ENCODE measurements at regions of chr11 and their contacts with region 1.

Region 1: GRCh38 chr11:77091146-77091940 is 11.3 kb upstream of the OMP start:
- DNase-seq: peak; percentile 65 to 79 (median 74)
- H3K4me3 ChIP-seq: no peak overlapping the region
- H3K4me3 Mint-ChIP-seq: peak overlapping the region in 1 of 8 donors; percentile 18
- H3K27ac ChIP-seq: no peak overlapping the region
- H3K27ac Mint-ChIP-seq: peak overlapping the region in 2 of 7 donors; percentile 36 to 67
- H3K4me1 ChIP-seq: peaks cover 6% of the 10 kb centered on the region
- H3K4me1 Mint-ChIP-seq: peaks cover 1 to 7% (median 5%) of the 10 kb centered on the region in 4 donors
- H3K27me3 ChIP-seq: no peaks in the 10 kb centered on the region
- H3K27me3 Mint-ChIP-seq: no peaks in the 10 kb centered on the region

Region 2: GRCh38 chr11:76807206-76807875 is 284.0 kb before region 1 on chr11:
- CTCF ChIA-PET with region 1: interaction called, 7 read pairs
- POLR2A ChIA-PET with region 1: no interaction called
- intact Hi-C with region 1: loop called (anchors 5 kb)
- DNase-seq: peak; percentile 25 to 57 (median 45)
- H3K4me3 ChIP-seq: no peak overlapping the region
- H3K4me3 Mint-ChIP-seq: peak overlapping the region in 1 of 8 donors; percentile 48
- H3K27ac ChIP-seq: no peak overlapping the region
- H3K27ac Mint-ChIP-seq: no peak overlapping the region
- H3K4me1 ChIP-seq: peaks cover 5% of the 10 kb centered on the region
- H3K4me1 Mint-ChIP-seq: peaks cover 4 to 21% (median 10%) of the 10 kb centered on the region in 4 donors
- H3K27me3 ChIP-seq: no peaks in the 10 kb centered on the region
- H3K27me3 Mint-ChIP-seq: peaks cover 6 to 23% of the 10 kb centered on the region in 2 donors

Region 3: GRCh38 chr11:76885390-76886097 is 205.8 kb before region 1 on chr11:
- CTCF ChIA-PET with region 1: no interaction called
- POLR2A ChIA-PET with region 1: no interaction called
- intact Hi-C with region 1: no loop called
- DNase-seq: no peak
- H3K4me3 ChIP-seq: no peak overlapping the region
- H3K4me3 Mint-ChIP-seq: peak overlapping the region in 2 of 8 donors; percentile 7
- H3K27ac ChIP-seq: no peak overlapping the region
- H3K27ac Mint-ChIP-seq: no peak overlapping the region
- H3K4me1 ChIP-seq: no peaks in the 10 kb centered on the region
- H3K4me1 Mint-ChIP-seq: peaks cover 0 to 1% (median under 1%) of the 10 kb centered on the region in 4 donors
- H3K27me3 ChIP-seq: no peaks in the 10 kb centered on the region
- H3K27me3 Mint-ChIP-seq: no peaks in the 10 kb centered on the region

Region 4: DNA sequence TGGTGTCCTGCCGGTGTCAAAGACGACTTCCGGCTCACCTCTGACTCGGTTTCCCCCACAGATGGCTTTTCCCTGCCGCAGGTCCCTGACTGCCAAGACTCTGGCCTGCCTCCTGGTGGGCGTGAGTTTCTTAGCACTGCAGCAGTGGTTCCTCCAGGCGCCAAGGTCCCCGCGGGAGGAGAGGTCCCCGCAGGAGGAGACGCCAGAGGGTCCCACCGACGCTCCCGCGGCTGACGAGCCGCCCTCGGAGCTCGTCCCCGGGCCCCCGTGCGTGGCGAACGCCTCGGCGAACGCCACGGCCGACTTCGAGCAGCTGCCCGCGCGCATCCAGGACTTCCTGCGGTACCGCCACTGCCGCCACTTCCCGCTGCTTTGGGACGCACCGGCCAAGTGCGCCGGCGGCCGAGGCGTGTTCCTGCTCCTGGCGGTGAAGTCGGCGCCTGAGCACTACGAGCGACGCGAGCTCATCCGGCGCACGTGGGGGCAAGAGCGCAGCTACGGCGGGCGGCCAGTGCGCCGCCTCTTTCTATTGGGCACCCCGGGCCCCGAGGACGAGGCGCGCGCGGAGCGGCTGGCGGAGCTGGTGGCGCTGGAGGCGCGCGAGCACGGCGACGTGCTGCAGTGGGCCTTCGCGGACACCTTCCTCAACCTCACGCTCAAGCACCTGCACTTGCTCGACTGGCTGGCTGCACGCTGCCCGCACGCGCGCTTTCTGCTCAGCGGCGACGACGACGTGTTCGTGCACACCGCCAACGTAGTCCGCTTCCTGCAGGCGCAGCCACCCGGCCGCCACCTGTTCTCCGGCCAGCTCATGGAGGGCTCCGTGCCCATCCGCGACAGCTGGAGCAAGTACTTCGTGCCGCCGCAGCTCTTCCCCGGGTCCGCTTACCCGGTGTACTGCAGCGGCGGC is 51.6 kb before region 1 on chr11:
- CTCF ChIA-PET with region 1: interaction called, 32 read pairs
- POLR2A ChIA-PET with region 1: no interaction called
- intact Hi-C with region 1: no loop called
- DNase-seq: peak in 3 of 5 donors; percentile 5 to 23 (median 8)
- H3K4me3 ChIP-seq: no peak overlapping the region
- H3K4me3 Mint-ChIP-seq: peak overlapping the region in 3 of 8 donors; percentile 17 to 59 (median 48)
- H3K27ac ChIP-seq: no peak overlapping the region
- H3K27ac Mint-ChIP-seq: no peak overlapping the region
- H3K4me1 ChIP-seq: no peaks in the 10 kb centered on the region
- H3K4me1 Mint-ChIP-seq: peaks cover 6 to 18% (median 12%) of the 10 kb centered on the region in 4 donors
- H3K27me3 ChIP-seq: no peaks in the 10 kb centered on the region
- H3K27me3 Mint-ChIP-seq: peaks cover 33 to 46% of the 10 kb centered on the region in 2 donors

Region 5: GRCh38 chr11:77053217-77054015 is 37.9 kb before region 1 on chr11:
- CTCF ChIA-PET with region 1: interaction called, 107 read pairs
- POLR2A ChIA-PET with region 1: no interaction called
- intact Hi-C with region 1: no loop called
- DNase-seq: no peak
- H3K4me3 ChIP-seq: no peak overlapping the region
- H3K4me3 Mint-ChIP-seq: no peak overlapping the region
- H3K27ac ChIP-seq: no peak overlapping the region
- H3K27ac Mint-ChIP-seq: peak overlapping the region in 1 of 7 donors; percentile 6
- H3K4me1 ChIP-seq: no peaks in the 10 kb centered on the region
- H3K4me1 Mint-ChIP-seq: no peaks in the 10 kb centered on the region
- H3K27me3 ChIP-seq: no peaks in the 10 kb centered on the region
- H3K27me3 Mint-ChIP-seq: no peaks in the 10 kb centered on the region

Region 6: DNA sequence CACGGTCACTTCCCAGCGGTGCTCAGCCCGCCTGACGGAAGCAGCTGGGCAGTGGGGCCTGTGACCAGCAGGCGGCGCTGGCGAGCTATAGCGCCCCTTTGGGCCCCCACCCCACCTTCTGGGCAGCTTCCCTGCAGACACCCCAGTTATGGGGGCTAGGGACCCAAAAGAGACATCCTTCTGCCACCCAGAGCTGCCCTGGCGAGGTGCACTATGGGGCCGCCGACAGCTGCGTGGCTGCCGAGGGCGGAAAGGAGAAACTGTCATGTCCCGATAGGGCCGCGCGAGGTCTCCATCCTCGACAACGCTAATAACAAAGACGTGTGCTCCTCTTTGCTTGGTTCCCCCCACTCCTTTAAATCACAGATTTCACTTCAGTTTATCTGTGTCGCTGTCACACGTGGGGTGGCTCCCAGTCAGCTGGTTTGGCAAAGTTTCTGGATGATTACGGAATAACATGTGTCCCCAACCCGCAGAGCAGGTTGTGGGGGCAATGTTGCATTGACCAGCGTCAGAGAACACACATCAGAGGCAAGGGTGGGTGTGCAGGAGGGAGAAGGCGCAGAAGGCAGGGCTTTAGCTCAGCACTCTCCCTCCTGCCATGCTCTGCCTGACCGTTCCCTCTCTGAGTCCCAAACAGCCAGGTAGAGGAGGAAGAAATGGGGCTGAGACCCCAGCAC is 36.0 kb after region 1 on chr11:
- CTCF ChIA-PET with region 1: interaction called, 15 read pairs
- POLR2A ChIA-PET with region 1: no interaction called
- intact Hi-C with region 1: no loop called
- DNase-seq: peak in 4 of 5 donors; percentile 46 to 66 (median 54)
- H3K4me3 ChIP-seq: peak overlapping the region; percentile 20 to 62
- H3K4me3 Mint-ChIP-seq: peak overlapping the region; percentile 48 to 80 (median 73)
- H3K27ac ChIP-seq: no peak overlapping the region
- H3K27ac Mint-ChIP-seq: peak overlapping the region in 3 of 7 donors; percentile 52 to 83 (median 56)
- H3K4me1 ChIP-seq: peaks cover 14% of the 10 kb centered on the region
- H3K4me1 Mint-ChIP-seq: peaks cover 3 to 17% (median 8%) of the 10 kb centered on the region in 4 donors
- H3K27me3 ChIP-seq: no peaks in the 10 kb centered on the region
- H3K27me3 Mint-ChIP-seq: no peaks in the 10 kb centered on the region

Measured in CD4-positive, alpha-beta memory T cell (primary cell).